K562 (cell line): ENCODE measurements at regions of chr2 and their contacts with region 1.

Region 1: GRCh38 chr2:37537316-37537715 is 134.1 kb downstream of the CDC42EP3 start:
- DNase-seq: no peak
- ATAC-seq: no peak
- H3K4me3 ChIP-seq: no peak overlapping the region
- H3K27ac ChIP-seq: no peak overlapping the region
- H3K4me1 ChIP-seq: no peaks in the 10 kb centered on the region
- H3K27me3 ChIP-seq: no peaks in the 10 kb centered on the region
- CTCF ChIP-seq: no peak
- EP300 ChIP-seq: no peak
- POLR2A ChIP-seq: no peak
- RAD21 ChIP-seq: no peak

Region 2: GRCh38 chr2:37168217-37168981 is 368.9 kb before region 1 on chr2:
- CTCF ChIA-PET with region 1: no interaction called
- POLR2A ChIA-PET with region 1: no interaction called
- in situ Hi-C with region 1: no loop called
- intact Hi-C with region 1: loop called (anchors 5 kb)
- DNase-seq: peak; percentile 61 to 74 (median 64)
- ATAC-seq: peak; percentile 99
- H3K4me3 ChIP-seq: no peak overlapping the region
- H3K27ac ChIP-seq: no peak overlapping the region
- H3K4me1 ChIP-seq: no peaks in the 10 kb centered on the region
- H3K27me3 ChIP-seq: no peaks in the 10 kb centered on the region
- CTCF ChIP-seq: peak; percentile 52 to 80 (median 77)
- EP300 ChIP-seq: no peak
- POLR2A ChIP-seq: no peak
- RAD21 ChIP-seq: peak; percentile 13 to 69; a peak in 2 of 4 replicates

Region 3: DNA sequence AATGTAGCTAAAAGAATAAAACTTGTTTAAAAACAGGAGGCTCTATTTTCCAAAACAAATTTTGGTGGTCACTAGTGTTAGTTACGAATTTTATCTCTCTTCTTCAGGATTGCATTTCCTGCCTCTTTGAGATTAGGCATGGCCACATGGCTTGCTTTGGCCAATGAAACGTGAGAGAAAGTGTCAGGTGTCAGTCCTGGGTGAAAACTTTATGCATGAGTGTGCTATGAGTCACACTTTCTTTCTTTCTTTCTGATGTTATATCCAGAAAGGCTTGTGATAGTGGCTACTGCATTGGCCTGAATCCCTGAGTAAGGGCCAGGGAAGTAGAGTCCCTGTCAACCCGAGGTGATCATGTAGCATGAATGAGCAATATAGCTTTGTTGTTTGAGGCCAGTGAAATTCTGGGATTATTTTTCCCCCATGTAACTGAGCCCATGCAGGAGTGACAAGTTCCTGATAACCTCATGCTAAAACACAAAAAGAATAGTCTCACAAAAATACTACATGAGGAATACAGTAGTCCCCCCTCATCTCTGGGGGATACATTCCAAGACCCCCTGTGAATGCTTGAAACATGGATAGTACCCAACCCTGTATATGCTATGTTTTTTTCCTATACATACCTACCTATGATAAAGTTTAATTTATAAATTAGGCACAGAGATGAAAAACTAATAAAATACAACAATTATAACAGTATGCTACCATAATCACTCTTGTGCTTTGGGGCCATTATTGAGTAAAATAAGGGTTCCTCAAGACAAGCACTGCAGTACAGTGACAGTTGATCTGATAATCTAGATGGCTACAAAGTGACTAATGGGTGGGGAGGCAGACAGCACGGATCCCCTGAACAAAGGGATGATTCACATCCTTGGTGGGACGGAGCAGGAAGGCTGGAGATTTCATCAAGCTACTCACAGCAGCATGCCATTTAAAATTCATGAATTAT is 24.6 kb after region 1 on chr2:
- CTCF ChIA-PET with region 1: no interaction called
- POLR2A ChIA-PET with region 1: no interaction called
- in situ Hi-C with region 1: no loop called
- intact Hi-C with region 1: loop called (anchors 2 kb)
- DNase-seq: peak; percentile 77 to 91 (median 82)
- ATAC-seq: peak; percentile 92
- H3K4me3 ChIP-seq: peak overlapping the region; percentile 33; the same call in 1 of the 2 replicates
- H3K27ac ChIP-seq: peak overlapping the region; percentile 95
- H3K4me1 ChIP-seq: peaks cover 0 to 35% of the 10 kb centered on the region in 2 experiments; a peak in 4 of 5 replicates
- H3K27me3 ChIP-seq: no peaks in the 10 kb centered on the region
- CTCF ChIP-seq: no peak
- EP300 ChIP-seq: peak; percentile 93
- POLR2A ChIP-seq: 0 out of 2 replicates have a peak, but pooled peaks have one; percentile 44
- RAD21 ChIP-seq: no peak; a peak in 1 of 4 replicates